ENCODE measurements at regions of chr4 and their contacts with region 1.

Region 1: DNA sequence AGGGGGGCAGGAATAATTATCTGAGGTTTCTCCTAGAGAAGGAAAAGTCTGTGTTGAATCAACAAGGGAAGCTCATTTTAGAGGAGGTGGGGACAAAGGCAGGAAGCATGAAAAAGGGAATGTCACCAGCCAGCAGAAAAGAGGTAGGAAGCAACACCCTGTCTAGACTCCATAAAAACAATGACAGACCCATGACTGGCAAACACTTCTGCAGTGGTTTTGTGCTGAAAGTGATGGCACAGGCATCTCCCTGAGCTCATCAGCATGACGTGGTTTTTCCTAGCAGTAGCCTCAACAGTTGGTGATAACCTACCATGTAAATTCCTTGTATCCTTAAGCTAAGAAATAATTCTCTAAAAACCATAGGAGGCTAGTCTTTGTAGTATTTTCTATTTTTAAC is 110.7 kb upstream of the GALNT7 start:
- DNase-seq: no peak
- CTCF ChIP-seq: no peak

Region 2: DNA sequence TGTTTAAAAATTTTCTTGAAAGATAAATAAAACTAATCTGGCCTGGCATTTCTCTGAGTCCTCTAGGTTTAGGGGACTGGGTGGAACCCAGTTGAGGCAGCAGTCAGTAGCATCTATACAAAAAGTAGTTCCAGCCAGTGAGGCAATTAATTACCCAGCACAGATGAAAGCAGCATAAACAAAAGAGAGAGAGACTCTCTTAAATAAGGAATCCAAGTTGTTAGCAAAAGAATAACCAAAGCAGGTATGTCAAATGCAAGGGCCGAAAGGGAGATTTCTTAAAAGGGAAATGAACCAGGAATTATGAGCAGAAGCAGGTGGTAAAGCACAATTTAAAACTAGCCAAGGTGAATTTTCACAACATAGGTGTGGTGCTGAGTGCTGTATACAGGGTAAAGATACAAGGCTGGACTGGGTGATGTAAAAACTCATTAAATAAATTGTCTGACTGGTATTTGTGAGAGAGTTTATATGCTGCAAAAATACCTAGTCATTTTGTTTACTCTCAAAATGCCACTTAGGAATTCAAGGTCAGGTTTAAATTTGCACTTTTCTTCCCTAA is 16.1 kb after region 1 on chr4:
- CTCF ChIA-PET with region 1: interaction called, 11 read pairs
- POLR2A ChIA-PET with region 1: no interaction called
- DNase-seq: no peak
- CTCF ChIP-seq: no peak

Measured in GM10248 (cell line).